OCI-LY7 (cell line): ENCODE measurements at regions of chr15 and their contacts with region 1.

Region 1: DNA sequence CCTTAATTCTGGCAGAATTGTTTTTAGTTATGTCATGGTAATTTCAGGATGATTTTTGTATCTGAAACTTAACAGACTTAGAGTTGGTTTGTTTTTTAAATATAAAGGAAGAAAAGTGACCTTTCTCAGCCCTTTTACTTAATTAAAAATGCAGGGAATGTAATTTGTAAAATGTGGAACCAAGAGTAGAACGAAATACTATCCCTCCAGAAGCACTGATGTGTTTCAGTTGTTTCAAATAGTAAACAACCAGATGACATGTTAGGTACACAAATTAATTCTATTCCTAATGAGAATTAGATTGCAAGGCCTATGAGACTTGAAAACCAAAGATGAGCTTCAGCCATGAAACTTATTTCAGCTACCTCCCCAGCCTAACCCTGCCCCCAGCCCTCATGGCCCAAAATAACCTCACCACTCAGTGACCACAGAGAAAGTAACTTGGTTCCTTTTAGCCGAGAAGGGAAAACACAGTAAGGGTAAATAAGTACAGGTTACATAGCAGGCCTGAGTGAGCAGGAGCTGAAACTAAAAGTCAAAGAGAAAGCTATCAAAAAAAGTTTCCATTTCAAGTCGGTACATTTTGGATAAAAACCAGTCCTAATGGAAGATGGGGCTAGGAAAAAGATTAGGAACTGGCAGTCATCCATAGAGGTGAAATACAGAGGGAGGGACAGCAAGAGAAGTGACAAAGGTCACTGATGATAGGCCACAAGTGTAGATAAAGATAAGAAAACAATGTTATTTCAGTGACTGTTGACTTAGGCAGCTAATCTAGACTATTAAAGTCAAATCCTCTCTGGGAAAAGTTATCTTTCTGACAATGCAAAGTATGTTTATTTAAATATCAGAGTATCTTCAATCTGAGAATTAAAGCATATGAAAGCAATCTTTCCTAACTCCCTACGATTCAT is 23.2 kb downstream of the SENP8 start:
- DNase-seq: peak; percentile 12
- H3K4me3 ChIP-seq: no peak overlapping the region
- H3K27ac ChIP-seq: peak overlapping the region; percentile 2
- H3K4me1 ChIP-seq: peaks cover 12% of the 10 kb centered on the region
- CTCF ChIP-seq: no peak

Region 2: GRCh38 chr15:72042839-72043238 is 98.6 kb before region 1 on chr15:
- CTCF ChIA-PET with region 1: no interaction called
- POLR2A ChIA-PET with region 1: no interaction called
- intact Hi-C with region 1: loop called (anchors 5 kb)
- DNase-seq: peak; percentile 19
- H3K4me3 ChIP-seq: no peak overlapping the region
- H3K27ac ChIP-seq: no peak overlapping the region
- H3K4me1 ChIP-seq: peaks cover 12% of the 10 kb centered on the region
- CTCF ChIP-seq: peak; percentile 72